K562 (cell line): ENCODE measurements at regions of chr1 and their contacts with region 1.

Region 1: DNA sequence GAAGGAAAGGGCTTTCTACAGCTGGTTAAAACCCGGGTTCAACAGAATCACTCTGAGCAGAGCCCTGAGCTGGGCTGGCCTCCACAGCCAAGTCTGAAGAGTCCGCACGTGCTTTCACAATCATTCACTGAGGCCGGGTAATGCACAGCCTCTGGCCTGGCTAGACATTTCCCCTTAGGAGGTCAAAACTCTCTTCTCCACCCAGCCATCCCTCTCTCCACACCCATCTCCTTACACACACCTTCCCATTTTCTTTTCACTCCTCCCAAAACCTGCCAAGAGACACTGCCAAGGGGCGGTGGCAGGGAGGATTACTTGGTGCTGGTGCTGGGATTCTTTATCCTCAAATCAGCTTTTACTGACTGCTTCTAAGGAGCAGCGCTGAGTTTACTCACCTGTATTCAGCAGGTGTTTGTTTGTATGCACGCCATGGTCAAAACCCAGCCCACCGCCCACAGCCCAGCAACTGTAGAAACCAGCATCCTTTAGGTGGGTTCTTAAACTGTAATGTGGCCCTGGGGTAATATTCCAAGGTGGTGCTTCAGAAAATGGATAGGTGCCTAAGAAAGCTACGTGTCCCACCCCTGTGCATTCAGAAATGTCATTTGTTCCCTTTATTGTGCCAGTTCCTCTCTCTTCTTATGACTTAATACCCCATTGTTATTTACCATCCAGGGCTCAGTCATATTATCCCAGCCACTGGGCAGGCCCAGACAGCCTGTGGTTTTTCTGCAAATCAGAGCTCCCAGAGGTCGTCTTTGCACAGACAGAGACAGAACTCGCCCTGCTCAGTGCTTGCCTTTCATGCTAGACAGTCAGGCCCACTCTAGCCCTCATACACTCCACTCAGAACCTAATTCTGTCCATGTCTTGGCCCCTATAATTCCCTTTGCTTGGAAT is 80.2 kb downstream of the ADSS2 start:
- DNase-seq: no peak
- ATAC-seq: no peak
- H3K4me3 ChIP-seq: no peak overlapping the region
- H3K27ac ChIP-seq: no peak overlapping the region
- H3K4me1 ChIP-seq: peaks cover 31 to 41% of the 10 kb centered on the region in 2 experiments
- H3K27me3 ChIP-seq: no peaks in the 10 kb centered on the region
- CTCF ChIP-seq: no peak
- EP300 ChIP-seq: no peak
- POLR2A ChIP-seq: no peak
- RAD21 ChIP-seq: no peak

Region 2: DNA sequence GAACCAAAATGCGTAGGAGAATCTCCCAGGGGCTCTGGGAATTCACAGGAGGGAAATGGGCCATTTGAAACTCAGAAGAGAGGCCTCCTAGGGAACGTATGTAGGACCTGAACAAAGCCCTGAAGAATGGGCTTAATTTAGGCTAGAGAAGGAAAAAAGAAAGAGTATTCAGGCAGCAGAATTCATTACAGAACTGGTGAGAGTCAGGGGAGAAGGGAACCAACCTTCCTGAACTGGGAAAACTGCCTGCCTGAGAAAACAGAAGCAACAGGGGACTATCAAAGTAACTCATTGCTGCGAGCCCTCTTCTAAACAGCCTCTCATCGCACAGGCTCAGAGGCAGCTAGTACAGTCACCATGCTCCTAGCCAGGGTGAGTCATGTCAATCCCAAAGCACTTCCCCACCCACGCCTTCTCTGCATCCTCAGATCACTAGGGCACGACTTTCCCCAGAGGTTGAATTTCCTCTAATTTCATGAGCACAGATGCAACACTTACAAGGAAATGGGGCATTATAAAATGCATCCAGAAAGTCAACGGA is 17.9 kb before region 1 on chr1:
- CTCF ChIA-PET with region 1: no interaction called
- POLR2A ChIA-PET with region 1: interaction called, 45 read pairs
- in situ Hi-C with region 1: no loop called
- intact Hi-C with region 1: no loop called
- DNase-seq: peak; percentile 73 to 92 (median 80)
- ATAC-seq: peak; percentile 83
- H3K4me3 ChIP-seq: no peak overlapping the region
- H3K27ac ChIP-seq: peak overlapping the region; percentile 71
- H3K4me1 ChIP-seq: peaks cover 20 to 47% of the 10 kb centered on the region in 2 experiments
- H3K27me3 ChIP-seq: no peaks in the 10 kb centered on the region
- CTCF ChIP-seq: no peak
- EP300 ChIP-seq: peak; percentile 75
- POLR2A ChIP-seq: peak; percentile 52
- RAD21 ChIP-seq: peak in 1 of 2 experiments; percentile 32; a peak in 2 of 4 replicates

Region 3: DNA sequence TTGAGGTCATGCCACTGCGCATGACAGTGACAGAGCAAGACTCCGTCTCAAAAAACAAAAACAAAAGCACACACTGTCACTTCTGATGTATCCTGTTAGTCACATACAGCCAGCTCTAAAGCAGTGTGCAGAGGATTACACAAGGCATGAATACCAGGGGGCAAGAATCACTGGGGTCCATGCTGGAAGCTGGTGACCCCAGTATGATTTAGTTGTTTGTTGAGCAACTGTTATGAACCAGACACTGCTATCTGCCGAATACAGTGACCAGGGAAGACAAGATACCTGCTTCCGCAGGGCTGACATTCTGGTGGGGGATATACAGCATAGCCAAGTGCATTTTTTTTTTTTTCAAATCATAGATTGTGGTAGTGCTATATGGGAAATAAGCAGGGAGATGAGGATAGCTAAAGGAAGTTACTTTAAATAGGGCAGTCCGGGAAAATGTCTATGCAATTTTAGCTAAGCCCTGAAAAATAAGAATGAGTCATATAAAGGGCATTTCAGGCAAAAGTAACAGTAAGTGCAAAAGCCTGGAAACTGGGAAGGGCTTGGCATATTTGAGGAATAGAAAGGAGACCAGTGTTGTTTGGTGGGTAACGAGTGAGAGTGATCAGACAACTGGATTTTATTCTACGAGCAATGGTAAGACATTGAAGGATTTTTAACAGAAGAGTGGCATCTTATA is 10.5 kb after region 1 on chr1:
- CTCF ChIA-PET with region 1: no interaction called
- POLR2A ChIA-PET with region 1: interaction called, 14 read pairs
- in situ Hi-C with region 1: no loop called
- intact Hi-C with region 1: no loop called
- DNase-seq: no peak
- ATAC-seq: peak; percentile 29
- H3K4me3 ChIP-seq: no peak overlapping the region
- H3K27ac ChIP-seq: no peak overlapping the region
- H3K4me1 ChIP-seq: peaks cover 0 to 3% of the 10 kb centered on the region in 2 experiments; a peak in 2 of 5 replicates
- H3K27me3 ChIP-seq: no peaks in the 10 kb centered on the region
- CTCF ChIP-seq: no peak
- EP300 ChIP-seq: no peak
- POLR2A ChIP-seq: no peak
- RAD21 ChIP-seq: no peak